ENCODE measurements at regions of chr9 and their contacts with region 1.

Region 1: DNA sequence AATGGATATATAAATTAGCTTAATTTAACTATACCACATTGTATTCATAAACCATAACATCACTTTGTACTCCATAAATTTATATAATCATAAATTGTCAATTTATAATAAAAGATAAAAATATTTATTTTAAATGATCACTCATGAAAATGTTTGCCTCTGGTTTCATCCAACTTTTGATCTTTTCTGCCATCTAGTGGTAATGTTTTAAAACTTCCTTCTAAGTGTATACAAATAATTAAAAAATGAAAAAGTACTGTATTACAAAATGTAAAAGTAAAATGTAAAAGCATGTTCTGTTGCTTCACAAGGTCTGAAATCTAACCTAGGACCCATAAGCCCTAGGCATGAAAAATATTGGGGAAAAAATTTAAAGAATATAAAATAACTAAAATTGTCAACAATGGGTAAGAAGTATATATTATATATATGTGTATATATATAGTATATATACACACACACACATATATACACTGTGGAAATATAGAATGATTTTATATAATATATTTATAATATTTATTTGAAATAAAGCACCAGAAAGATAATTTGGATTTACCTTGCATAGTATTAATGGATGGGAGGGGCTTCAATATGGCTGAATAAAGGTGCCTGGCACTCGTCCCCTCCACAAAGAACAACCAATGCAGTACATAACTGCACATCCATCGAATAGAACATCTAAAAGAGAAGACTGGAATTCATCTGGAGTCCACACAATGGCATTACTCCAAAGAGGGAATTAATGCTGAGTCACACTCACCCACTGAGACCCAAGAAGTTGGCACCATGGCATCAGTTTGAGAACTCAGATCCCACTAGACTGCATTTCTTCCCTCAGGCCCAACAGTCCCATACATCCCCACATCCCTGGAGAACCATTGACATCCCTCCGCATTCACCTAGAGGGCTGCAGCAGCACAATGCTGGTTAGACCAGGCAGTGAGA is 32.5 kb downstream of the ANXA1 start:
- DNase-seq: no peak
- H3K4me3 Mint-ChIP-seq: no peak overlapping the region
- H3K27ac Mint-ChIP-seq: no peak overlapping the region
- H3K4me1 Mint-ChIP-seq: peaks cover 9% of the 10 kb centered on the region
- H3K27me3 Mint-ChIP-seq: peaks cover 29% of the 10 kb centered on the region

Region 2: DNA sequence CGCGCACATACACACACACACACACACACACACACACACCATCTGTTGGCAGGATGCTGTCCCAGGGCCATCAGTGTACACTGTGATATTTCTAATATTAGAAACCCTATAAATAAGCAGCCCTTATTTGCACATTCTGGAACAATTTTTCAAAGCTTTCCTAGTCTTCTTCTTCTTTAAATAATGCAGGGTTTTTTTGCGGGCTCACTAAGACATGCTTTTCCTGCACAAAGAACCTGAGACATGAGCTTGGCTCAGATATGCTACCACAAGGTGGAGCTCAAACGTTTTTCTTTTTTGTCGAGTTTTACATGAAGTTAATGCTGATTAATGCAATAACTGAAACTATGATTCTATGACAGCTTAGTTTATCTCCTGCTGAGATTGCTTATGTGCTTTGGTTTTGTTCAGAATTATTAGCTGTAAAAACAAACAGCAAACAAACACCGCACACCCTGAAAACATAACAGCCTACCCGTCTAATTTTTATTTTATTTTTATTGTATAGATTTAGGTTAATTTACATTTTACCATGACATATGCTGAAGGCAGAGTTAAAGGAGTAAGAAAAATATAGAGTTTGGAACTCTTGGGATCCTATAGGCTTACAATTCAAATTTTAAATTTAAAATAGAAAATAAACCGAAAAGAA is 327.1 kb before region 1 on chr9:
- intact Hi-C with region 1: loop called (anchors 5 kb)
- DNase-seq: no peak
- H3K4me3 Mint-ChIP-seq: no peak overlapping the region
- H3K27ac Mint-ChIP-seq: no peak overlapping the region
- H3K4me1 Mint-ChIP-seq: no peaks in the 10 kb centered on the region
- H3K27me3 Mint-ChIP-seq: no peaks in the 10 kb centered on the region

Region 3: DNA sequence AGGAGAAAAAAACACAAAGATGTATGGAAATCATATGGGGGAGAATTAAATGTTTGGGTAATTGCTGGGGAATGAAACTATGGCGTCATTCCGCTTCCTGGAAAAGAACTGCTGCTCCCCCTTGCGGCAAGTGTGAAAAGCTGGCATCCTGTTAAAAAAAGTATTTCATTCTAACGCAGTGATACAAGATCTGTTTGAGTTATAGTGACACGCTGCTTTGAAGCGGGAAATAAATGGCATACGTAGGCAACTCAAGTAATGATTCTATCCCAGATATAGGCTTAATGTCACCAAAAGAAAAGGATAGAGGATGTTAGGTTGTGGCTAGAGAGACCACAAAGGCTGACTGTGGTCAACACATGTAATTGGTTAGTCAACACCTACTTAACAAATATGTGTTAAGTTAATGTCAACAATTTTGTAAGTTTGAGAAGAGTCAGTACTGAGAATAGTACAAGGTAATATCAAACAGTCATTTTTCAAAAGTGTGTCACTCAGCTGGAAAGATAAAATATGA is 161.1 kb before region 1 on chr9:
- intact Hi-C with region 1: loop called (anchors 5 kb)
- DNase-seq: peak; percentile 10
- H3K4me3 Mint-ChIP-seq: no peak overlapping the region
- H3K27ac Mint-ChIP-seq: no peak overlapping the region
- H3K4me1 Mint-ChIP-seq: peaks cover 9% of the 10 kb centered on the region
- H3K27me3 Mint-ChIP-seq: peaks cover 15% of the 10 kb centered on the region

Region 4: DNA sequence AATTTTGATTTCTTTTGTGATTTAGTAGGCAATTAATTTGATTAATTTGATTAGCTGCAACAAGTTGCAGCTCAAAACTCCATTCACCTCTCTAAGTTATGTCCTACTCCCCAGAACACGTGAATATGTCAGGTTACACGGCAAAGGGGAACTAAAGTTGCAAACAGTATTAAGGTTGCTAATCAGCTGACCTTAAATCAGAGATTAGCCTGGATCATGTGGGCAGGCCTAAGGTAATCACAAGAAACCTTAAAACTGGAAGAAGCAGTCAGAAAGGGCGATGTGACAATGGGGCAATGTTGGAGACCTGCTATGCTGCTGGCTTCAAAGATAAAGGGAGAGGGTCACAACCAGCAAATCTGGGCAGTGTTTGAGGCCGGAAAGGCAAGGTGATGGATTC is 79.8 kb before region 1 on chr9:
- intact Hi-C with region 1: loop called (anchors 1 kb)
- DNase-seq: no peak
- H3K4me3 Mint-ChIP-seq: no peak overlapping the region
- H3K27ac Mint-ChIP-seq: no peak overlapping the region
- H3K4me1 Mint-ChIP-seq: peaks cover 2% of the 10 kb centered on the region
- H3K27me3 Mint-ChIP-seq: peaks cover 25% of the 10 kb centered on the region

Measured in activated T-helper 2 cell treated with anti-CD3 and anti-CD28 coated beads, Interferon-gamma antibody, Interleukin-2, Interleukin-4, amounts not matched to agents 10 μg/mL and 5 μg/mL and 100 μg/mL, durations not matched to agents 14 hours and 24 hours and 36 hours (primary cell).